ENCODE measurements at regions of chr14 and their contacts with region 1.

Region 1: GRCh38 chr14:69153131-69153872 is 383 bp upstream of the DCAF5 start:
- DNase-seq: peak; percentile 71
- ATAC-seq: peak; percentile 93
- H3K4me3 ChIP-seq: peak overlapping the region; percentile 96
- H3K27ac ChIP-seq: peak overlapping the region; percentile 48; the same call in 1 of the 2 replicates
- H3K4me1 ChIP-seq: peaks cover 8% of the 10 kb centered on the region; the same call in 1 of the 2 replicates
- H3K27me3 ChIP-seq: peaks cover 1 to 5% of the 10 kb centered on the region in 2 experiments; a peak in 1 of 4 replicates
- CTCF ChIP-seq: no peak
- EP300 ChIP-seq: no peak
- POLR2A ChIP-seq: peak; percentile 86
- RAD21 ChIP-seq: no peak

Region 2: GRCh38 chr14:69027242-69027913 is 125.9 kb before region 1 on chr14:
- CTCF ChIA-PET with region 1: no interaction called
- POLR2A ChIA-PET with region 1: no interaction called
- RAD21 ChIA-PET with region 1: no interaction called
- SMC1A ChIA-PET with region 1: no interaction called
- in situ Hi-C with region 1: no loop called
- intact Hi-C with region 1: no loop called
- DNase-seq: no peak
- ATAC-seq: no peak
- H3K4me3 ChIP-seq: no peak overlapping the region
- H3K27ac ChIP-seq: no peak overlapping the region
- H3K4me1 ChIP-seq: no peaks in the 10 kb centered on the region
- H3K27me3 ChIP-seq: no peaks in the 10 kb centered on the region; a peak in 1 of 4 replicates
- CTCF ChIP-seq: no peak
- EP300 ChIP-seq: no peak
- POLR2A ChIP-seq: no peak
- RAD21 ChIP-seq: no peak

Region 3: DNA sequence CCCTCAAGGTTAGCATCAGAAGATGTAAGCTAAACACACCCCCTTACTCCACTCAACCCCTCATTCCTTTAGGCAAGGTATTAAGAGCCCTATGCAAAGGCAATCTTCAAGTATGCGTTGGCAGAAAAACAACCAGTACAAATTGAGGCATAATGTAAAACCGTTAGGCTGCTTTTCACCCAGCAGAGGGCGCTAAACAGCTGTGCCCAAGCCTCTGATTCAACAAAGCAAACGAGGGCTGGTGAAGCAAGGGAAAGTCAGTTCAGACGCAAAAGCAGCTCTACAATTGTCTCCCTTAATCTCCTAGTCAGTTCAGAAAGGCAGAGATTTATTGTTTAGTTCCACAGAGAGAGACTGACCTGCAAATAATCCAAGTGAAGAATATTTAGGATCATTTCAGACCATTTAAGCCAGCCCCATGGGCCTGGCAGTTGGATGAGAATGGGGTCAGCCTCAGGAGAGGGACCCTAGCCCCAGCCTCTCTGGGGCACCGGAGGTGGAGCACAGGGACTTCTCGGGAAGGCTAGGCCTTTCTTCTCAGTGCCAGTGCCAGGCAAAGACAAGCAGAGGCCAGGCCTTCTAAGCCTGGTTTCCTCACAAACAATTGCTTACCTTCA is 23.9 kb before region 1 on chr14:
- CTCF ChIA-PET with region 1: interaction called, 58 read pairs
- POLR2A ChIA-PET with region 1: interaction called, 6 read pairs
- RAD21 ChIA-PET with region 1: interaction called, 16 read pairs
- SMC1A ChIA-PET with region 1: interaction called, 40 read pairs
- in situ Hi-C with region 1: no loop called
- intact Hi-C with region 1: no loop called
- DNase-seq: no peak
- ATAC-seq: peak; percentile 97
- H3K4me3 ChIP-seq: no peak overlapping the region
- H3K27ac ChIP-seq: no peak overlapping the region
- H3K4me1 ChIP-seq: peaks cover 8% of the 10 kb centered on the region; the same call in 1 of the 2 replicates
- H3K27me3 ChIP-seq: no peaks in the 10 kb centered on the region
- CTCF ChIP-seq: peak; percentile 91 to 98 (median 93)
- EP300 ChIP-seq: no peak
- POLR2A ChIP-seq: no peak
- RAD21 ChIP-seq: peak; percentile 92

Region 4: GRCh38 chr14:69138189-69138535 is 15.1 kb before region 1 on chr14:
- CTCF ChIA-PET with region 1: interaction called, 19 read pairs
- POLR2A ChIA-PET with region 1: interaction called, 5 read pairs
- RAD21 ChIA-PET with region 1: interaction called, 4 read pairs
- SMC1A ChIA-PET with region 1: interaction called, 11 read pairs
- in situ Hi-C with region 1: no loop called
- intact Hi-C with region 1: no loop called
- DNase-seq: no peak
- ATAC-seq: no peak
- H3K4me3 ChIP-seq: peak overlapping the region; percentile 2; the same call in 1 of the 2 replicates
- H3K27ac ChIP-seq: peak overlapping the region; percentile 46; the same call in 1 of the 2 replicates
- H3K4me1 ChIP-seq: peaks cover 18% of the 10 kb centered on the region
- H3K27me3 ChIP-seq: no peaks in the 10 kb centered on the region
- CTCF ChIP-seq: no peak
- EP300 ChIP-seq: no peak
- POLR2A ChIP-seq: no peak
- RAD21 ChIP-seq: no peak

Region 5: DNA sequence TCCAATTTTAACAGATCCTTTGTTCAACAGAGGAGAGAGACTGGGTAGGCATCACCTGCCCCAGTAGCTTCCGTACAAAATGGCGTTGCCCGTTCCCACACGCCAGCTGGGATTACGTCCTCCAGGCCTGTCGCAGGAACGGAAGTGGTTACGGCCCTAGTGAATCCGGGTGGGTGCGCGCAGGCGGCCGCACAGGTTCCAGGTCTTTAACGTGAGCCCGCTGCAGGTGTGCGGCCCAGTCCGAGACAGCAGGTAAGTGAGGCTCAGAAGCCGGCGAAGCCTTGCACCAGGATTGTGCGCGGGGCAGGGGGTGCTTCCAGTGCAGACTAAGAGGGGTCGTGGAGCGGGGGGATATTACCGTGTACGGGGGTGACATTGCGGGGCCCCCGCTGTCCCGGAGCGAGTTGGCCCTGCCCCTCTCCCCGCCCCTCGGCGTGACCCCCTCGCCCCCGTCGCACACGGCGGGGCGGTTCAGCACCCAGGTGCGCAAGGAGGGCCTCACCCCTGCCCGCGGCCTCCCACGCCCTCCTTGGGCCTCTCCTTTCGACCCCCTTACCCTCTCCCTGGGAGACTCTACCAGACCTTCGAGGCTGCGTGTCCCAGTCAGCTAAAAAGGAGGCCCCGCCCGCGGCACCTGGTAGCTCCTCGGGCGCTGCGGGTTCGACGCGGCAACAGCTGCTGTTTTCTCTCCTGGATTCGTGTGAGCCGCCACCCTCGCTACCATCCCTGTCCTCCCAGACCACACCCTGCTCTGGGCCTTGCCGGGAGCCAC is 38.2 kb after region 1 on chr14 and contains the start of gene EXD2:
- CTCF ChIA-PET with region 1: interaction called, 5 read pairs
- POLR2A ChIA-PET with region 1: interaction called, 3 read pairs
- RAD21 ChIA-PET with region 1: interaction called, 6 read pairs
- SMC1A ChIA-PET with region 1: interaction called, 5 read pairs
- in situ Hi-C with region 1: no loop called
- intact Hi-C with region 1: loop called (anchors 5 kb)
- DNase-seq: peak; percentile 61
- ATAC-seq: peak; percentile 96
- H3K4me3 ChIP-seq: peak within 1 kb of the TSS; percentile 80
- H3K27ac ChIP-seq: peak within 1 kb of the TSS; percentile 53
- H3K4me1 ChIP-seq: no peaks in the 10 kb centered on the region
- H3K27me3 ChIP-seq: no peaks in the 10 kb centered on the region
- CTCF ChIP-seq: no peak
- EP300 ChIP-seq: no peak
- POLR2A ChIP-seq: peak; percentile 66
- RAD21 ChIP-seq: no peak
- polyA plus RNA-seq, gene EXD2: 1.0 to 1.3 TPM

Region 6: DNA sequence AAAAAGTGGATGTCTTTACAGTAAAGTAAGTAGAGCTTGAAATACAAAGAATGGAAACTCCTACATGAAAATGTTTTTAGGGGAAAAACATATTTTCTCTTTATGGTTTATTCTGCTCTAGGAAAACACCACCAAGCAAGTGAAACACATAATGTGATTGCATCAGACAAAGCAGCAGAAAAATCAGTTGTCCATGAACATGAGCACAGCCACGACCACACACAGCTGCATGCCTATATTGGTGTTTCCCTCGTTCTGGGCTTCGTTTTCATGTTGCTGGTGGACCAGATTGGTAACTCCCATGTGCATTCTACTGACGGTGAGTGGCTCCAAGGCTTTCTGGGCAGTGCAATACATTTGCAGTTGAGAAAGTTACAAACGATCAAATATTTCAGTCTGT is 288.6 kb after region 1 on chr14:
- CTCF ChIA-PET with region 1: no interaction called
- POLR2A ChIA-PET with region 1: interaction called, 10 read pairs
- RAD21 ChIA-PET with region 1: no interaction called
- SMC1A ChIA-PET with region 1: no interaction called
- in situ Hi-C with region 1: no loop called
- intact Hi-C with region 1: no loop called
- DNase-seq: peak; percentile 58
- ATAC-seq: peak; percentile 95
- H3K4me3 ChIP-seq: no peak overlapping the region
- H3K27ac ChIP-seq: peak overlapping the region; percentile 65
- H3K4me1 ChIP-seq: peaks cover 4% of the 10 kb centered on the region; the same call in 1 of the 2 replicates
- H3K27me3 ChIP-seq: no peaks in the 10 kb centered on the region
- CTCF ChIP-seq: no peak
- EP300 ChIP-seq: no peak
- POLR2A ChIP-seq: peak; percentile 57
- RAD21 ChIP-seq: no peak